ENCODE measurements at regions of chr2 and their contacts with region 1.

Region 1: DNA sequence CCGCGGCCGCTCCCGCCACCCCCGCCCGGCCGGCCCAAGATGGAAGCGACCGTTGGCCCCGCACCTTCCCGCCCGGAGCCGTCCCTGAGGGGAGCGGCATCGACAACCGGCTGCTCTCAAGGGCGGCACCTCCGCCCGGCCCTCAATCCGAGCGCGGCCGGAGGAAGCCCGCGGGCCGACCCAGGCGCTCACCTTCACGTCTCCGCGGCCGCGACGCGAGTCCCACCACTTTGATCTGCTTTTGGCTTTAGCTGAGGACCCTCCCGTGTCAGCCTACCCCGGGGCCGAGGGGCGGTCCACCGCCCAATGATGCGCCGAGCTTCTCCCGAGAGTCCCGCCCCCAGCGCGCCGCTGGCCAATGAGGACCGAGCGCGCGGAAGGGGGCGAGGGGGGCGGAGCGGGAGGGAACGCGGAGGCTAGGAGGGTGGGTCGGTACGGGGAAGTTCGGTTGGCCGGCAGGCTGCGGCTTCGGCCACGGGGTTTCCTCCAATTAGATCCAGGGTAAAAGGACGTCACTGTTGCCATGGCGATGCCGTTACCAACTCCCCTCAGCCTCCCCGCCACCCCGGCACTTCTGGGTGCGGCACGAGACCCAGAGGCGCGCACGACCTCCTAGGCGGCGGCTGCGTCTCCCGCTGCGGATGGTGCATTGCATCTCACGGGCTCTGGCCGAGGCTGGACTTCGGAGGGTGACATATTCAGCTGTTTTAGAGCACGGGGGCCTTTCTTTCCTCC is at the start of gene YWHAQ:
- DNase-seq: peak; percentile 98
- ATAC-seq: peak; percentile 86 to 88
- H3K4me3 ChIP-seq: peak within 1 kb of the TSS; percentile 78 to 97 (median 94)
- H3K27ac ChIP-seq: peak within 1 kb of the TSS; percentile 91 to 98 (median 96)
- H3K4me1 ChIP-seq: peaks cover 41 to 43% of the 10 kb centered on the region in 2 donors
- H3K27me3 ChIP-seq: no peaks in the 10 kb centered on the region
- CTCF ChIP-seq: no peak
- POLR2A ChIP-seq: peak; percentile 96 to 99
- total RNA-seq, gene YWHAQ: 40.3 to 63.7 (median 48.4) TPM

Region 2: GRCh38 chr2:9423100-9423921 is 207.6 kb before region 1 on chr2 and contains the starts of genes CPSF3 and ITGB1BP1:
- in situ Hi-C with region 1: no loop called
- intact Hi-C with region 1: loop called (anchors 5 kb)
- DNase-seq: peak; percentile 94 to 96
- ATAC-seq: peak; percentile 93 to 96
- H3K4me3 ChIP-seq: peak within 1 kb of the TSS; percentile 84 to 99 (median 98)
- H3K27ac ChIP-seq: peak within 1 kb of the TSS; percentile 82 to 96 (median 91)
- H3K4me1 ChIP-seq: peaks cover 27 to 29% of the 10 kb centered on the region in 2 donors
- H3K27me3 ChIP-seq: no peaks in the 10 kb centered on the region
- CTCF ChIP-seq: peak in 3 of 5 experiments; percentile 11 to 35 (median 27)
- POLR2A ChIP-seq: peak; percentile 55 to 60
- total RNA-seq, gene CPSF3: 20.9 to 51.8 (median 24.1) TPM
- total RNA-seq, gene ITGB1BP1: 21.4 to 28.0 (median 26.4) TPM

Region 3: GRCh38 chr2:9555297-9556141 is 75.4 kb before region 1 on chr2 and contains the start of gene ADAM17:
- in situ Hi-C with region 1: loop called in 2 of 4 experiments (anchors 10 kb)
- intact Hi-C with region 1: loop called (anchors 1 kb)
- DNase-seq: peak; percentile 96 to 97
- ATAC-seq: peak; percentile 83 to 85
- H3K4me3 ChIP-seq: peak within 1 kb of the TSS; percentile 91 to 98 (median 95)
- H3K27ac ChIP-seq: peak within 1 kb of the TSS; percentile 96 to 99 (median 98)
- H3K4me1 ChIP-seq: peaks cover 48 to 53% of the 10 kb centered on the region in 2 donors
- H3K27me3 ChIP-seq: no peaks in the 10 kb centered on the region
- CTCF ChIP-seq: peak; percentile 49 to 80 (median 68)
- POLR2A ChIP-seq: peak; percentile 86 to 95
- total RNA-seq, gene ADAM17: 13.5 to 27.1 (median 22.0) TPM

Region 4: DNA sequence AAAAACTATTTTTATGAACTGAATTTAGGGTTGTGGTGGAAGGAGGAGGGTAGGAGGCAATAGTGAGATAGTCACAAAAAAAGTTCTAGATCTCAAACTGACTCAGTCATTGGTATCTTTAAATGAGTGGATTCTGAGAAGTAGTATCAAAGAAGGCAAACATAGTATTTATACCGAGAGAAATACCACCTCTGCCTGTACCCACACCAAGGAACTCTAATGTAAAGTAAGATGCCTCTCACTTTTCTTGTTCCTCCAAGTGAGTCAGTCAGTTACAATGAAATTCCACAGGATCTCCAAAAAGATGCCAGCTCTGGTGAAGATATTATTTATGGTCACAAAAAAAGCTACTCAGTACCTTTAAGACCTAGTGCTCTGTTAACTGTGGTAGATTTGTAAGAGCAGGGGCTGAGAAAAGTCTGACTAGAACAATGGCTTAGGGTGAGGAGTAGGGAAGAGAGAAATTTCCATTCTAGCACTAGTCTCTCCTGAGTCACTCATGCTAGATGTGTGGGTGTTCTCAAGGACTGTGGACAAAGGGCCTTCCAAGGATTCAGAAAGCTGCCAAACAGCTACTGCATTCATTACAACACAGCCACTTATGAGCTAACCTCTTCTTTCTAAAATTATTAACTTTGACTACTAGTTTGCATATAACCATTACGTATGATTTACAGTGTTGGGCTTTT is 36.4 kb before region 1 on chr2:
- in situ Hi-C with region 1: no loop called
- intact Hi-C with region 1: no loop called
- DNase-seq: peak in 1 of 2 donors; percentile 37
- ATAC-seq: peak; percentile 84 to 94
- H3K4me3 ChIP-seq: no peak overlapping the region
- H3K27ac ChIP-seq: peak overlapping the region; percentile 35 to 69 (median 55)
- H3K4me1 ChIP-seq: peaks cover 25 to 39% of the 10 kb centered on the region in 2 donors
- H3K27me3 ChIP-seq: no peaks in the 10 kb centered on the region
- CTCF ChIP-seq: no peak
- POLR2A ChIP-seq: no peak

Region 5: GRCh38 chr2:9693211-9693520 is 62.2 kb after region 1 on chr2:
- in situ Hi-C with region 1: no loop called
- intact Hi-C with region 1: loop called (anchors 2 kb)
- DNase-seq: peak; percentile 87 to 96
- ATAC-seq: peak; percentile 97 to 98
- H3K4me3 ChIP-seq: peak overlapping the region; percentile 26 to 46 (median 38)
- H3K27ac ChIP-seq: peak overlapping the region; percentile 90 to 97 (median 96)
- H3K4me1 ChIP-seq: peaks cover 19 to 20% of the 10 kb centered on the region in 2 donors
- H3K27me3 ChIP-seq: no peaks in the 10 kb centered on the region
- CTCF ChIP-seq: no peak
- POLR2A ChIP-seq: no peak

Region 6: GRCh38 chr2:9757501-9758264 is 126.8 kb after region 1 on chr2:
- in situ Hi-C with region 1: no loop called
- intact Hi-C with region 1: loop called (anchors 5 kb)
- DNase-seq: peak; percentile 75 to 90
- ATAC-seq: peak; percentile 76 to 77
- H3K4me3 ChIP-seq: peak overlapping the region; percentile 42 to 57 (median 48)
- H3K27ac ChIP-seq: peak overlapping the region; percentile 90 to 96 (median 94)
- H3K4me1 ChIP-seq: peaks cover 54 to 55% of the 10 kb centered on the region in 2 donors
- H3K27me3 ChIP-seq: no peaks in the 10 kb centered on the region
- CTCF ChIP-seq: no peak
- POLR2A ChIP-seq: peak; percentile 55 to 58

Measured in gastrocnemius medialis (tissue), 4 donors.